Right ventricle myocardium inferior (tissue), 1 donor: ENCODE measurements at regions of chr10 and their contacts with region 1.

Region 1: DNA sequence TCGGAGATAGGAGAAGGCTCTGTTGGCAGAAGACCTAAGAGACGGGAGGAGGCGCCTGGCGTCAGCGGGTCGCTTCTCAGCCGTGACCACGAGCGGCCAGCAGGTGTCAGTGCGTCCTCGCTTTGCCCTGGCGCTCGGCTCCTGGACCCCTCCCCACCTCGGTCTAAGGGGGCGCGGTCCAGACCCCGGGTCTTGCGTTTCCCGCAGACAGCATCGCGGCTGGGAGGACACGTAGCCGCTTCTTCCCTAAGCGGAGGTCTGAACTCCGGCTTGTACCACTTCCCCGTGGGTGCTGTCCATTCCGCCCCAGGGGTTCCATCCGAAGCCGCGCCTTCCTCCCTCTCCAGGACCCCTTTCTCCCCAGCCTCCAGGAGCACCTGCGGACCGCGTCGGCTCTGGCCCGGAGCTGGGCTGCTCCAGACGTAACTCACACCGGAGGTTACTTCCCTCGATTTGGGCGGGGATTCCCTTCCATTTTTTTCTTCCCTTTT is 593 bp upstream of the ADRA2A start:
- DNase-seq: no peak
- ATAC-seq: peak; percentile 85

Region 2: DNA sequence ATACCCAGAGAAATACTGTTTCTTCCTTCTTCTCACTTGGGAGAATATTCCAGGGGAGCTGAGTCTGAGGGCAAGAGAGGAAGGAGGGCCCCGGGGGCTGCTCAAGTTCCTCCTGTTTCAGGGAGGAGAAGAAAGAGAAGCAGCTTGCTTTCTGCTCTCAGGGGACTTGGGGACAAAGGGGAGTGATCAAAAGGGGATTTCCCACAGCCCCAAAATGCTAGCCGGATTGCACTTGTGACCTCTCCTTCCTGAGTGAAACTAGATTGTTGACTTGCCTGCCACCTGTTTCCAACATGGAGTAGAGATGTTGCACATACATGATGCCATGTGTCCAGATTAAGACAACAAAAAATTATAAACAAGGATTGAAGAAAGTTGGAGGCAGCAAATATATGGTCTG is 233.2 kb before region 1 on chr10:
- intact Hi-C with region 1: no loop called
- DNase-seq: no peak
- ATAC-seq: no peak

Region 3: DNA sequence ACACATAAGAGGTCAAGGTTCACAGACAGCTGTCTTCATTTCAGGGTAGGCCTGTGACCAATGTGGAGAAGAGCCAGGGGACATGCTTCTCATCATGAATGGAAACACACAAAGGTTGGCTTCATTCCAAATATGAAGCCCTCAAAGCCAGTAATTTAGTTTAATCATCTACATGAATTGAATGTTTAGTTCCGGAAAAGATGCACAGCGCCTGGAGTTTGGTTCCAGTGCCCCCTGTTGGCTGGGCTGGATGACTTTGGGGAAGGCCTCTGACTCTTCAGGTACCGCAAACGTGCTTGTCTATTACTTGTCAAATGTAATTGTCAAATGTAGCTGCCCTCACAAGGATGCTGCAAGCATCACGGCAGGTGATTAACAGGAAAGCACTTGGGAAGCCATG is 131.3 kb after region 1 on chr10:
- intact Hi-C with region 1: loop called (anchors 5 kb)
- DNase-seq: no peak
- ATAC-seq: no peak

Region 4: GRCh38 chr10:111360260-111360925 is 284.2 kb after region 1 on chr10:
- intact Hi-C with region 1: loop called (anchors 1 kb)
- DNase-seq: no peak
- ATAC-seq: peak; percentile 84

Region 5: GRCh38 chr10:111598436-111599059 is 522.3 kb after region 1 on chr10:
- intact Hi-C with region 1: loop called (anchors 5 kb)
- DNase-seq: no peak
- ATAC-seq: peak; percentile 44